Cardiac septum (tissue), 1 donor: ENCODE measurements at regions of chr11 and their contacts with region 1.

Region 1: DNA sequence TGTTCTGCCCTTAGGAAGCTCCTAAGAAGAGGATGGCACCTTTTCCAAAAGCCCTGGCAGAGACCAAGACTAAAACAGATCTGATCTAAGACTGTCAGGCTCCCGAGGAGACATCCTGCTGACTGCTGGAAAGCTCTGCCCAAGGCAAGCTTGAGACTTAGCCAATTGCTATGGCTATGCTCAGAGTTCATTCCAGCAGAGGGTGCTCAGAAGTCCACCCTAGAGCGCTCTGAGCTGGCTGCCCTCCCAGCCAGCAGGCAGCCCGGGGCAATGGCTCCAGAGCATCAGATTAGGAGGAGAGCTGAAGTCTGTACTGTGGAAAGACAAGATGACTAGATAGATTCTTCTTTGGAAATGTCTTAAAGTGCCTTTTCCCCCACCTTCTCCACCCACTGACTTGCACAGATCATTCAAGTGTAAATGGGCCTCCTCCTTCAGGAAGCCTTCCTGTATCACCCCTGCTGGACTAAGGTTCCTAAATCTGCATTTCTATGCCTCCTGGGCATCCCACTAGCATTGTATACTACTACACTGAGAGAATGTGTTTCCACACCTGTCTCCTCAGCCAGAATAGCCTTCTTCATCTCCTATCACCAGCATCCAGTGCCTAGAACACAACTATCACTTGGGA is 23.4 kb downstream of the LRRC55 start:
- DNase-seq: no peak

Region 2: GRCh38 chr11:56750190-56750589 is 455.0 kb before region 1 on chr11:
- intact Hi-C with region 1: no loop called
- DNase-seq: no peak

Region 3: DNA sequence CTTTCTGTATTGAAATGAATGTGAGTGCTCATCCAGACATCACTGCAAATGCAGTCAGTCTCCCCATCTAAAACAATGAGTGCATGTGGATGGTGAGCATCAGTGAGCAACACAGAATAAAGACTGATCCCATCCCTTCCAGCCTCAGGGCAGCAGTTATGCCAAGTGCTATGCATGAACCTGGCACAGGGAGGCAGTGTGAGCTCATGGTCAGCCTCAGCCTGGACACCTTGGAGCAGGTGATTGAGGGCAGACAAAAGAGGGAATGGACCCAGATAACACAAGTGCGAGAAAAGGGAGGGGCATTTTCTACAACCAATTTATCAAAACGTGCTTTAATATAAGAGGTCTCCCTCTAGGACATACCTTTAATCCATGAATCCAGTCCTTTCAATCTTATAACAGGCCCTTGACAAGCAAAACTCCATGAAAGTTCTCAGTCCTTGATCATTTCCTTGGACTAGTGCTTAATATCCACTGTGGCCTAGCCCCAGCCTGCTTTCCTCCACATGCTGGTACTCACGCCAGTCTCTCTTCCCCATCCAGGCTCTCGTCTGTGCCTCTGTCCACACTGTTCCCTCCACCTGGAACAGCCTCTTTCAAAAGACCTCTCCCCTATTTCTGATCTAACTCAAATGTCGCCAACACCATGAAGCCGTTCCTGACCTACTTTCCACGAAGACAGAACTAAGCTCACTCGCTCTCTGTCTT is 73.9 kb before region 1 on chr11:
- intact Hi-C with region 1: loop called (anchors 5 kb)
- DNase-seq: no peak

Region 4: DNA sequence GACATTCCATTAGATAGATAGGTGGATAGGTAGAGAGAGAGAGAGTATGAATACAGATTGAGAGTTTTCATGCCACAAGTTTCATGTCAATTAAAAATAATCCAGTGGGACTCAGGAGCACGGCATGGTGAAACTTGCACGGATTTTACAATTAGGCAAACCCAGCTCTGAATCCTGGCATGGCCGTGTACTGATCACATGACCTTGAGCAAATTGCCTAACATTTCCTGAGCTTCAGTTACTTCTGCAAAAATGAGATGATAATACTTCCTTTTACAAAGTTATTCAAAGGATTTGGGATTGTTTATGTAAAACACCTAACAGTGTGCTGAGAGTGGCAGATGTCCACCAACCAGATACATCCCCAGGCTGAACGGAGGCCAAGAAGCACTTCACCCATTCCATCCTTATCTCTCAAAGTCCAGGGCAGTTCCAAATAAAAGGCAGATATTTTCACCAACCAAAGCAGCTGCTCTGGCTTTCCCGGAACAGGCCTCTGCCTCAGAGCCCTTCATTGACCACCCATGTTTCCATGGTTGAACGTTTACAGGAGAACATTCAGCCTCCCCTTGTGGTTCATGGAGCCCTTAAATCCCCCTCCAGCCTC is 14.0 kb after region 1 on chr11:
- intact Hi-C with region 1: no loop called
- DNase-seq: no peak

Region 5: GRCh38 chr11:57230791-57231538 is 25.8 kb after region 1 on chr11:
- intact Hi-C with region 1: loop called (anchors 2 kb)
- DNase-seq: no peak

Region 6: DNA sequence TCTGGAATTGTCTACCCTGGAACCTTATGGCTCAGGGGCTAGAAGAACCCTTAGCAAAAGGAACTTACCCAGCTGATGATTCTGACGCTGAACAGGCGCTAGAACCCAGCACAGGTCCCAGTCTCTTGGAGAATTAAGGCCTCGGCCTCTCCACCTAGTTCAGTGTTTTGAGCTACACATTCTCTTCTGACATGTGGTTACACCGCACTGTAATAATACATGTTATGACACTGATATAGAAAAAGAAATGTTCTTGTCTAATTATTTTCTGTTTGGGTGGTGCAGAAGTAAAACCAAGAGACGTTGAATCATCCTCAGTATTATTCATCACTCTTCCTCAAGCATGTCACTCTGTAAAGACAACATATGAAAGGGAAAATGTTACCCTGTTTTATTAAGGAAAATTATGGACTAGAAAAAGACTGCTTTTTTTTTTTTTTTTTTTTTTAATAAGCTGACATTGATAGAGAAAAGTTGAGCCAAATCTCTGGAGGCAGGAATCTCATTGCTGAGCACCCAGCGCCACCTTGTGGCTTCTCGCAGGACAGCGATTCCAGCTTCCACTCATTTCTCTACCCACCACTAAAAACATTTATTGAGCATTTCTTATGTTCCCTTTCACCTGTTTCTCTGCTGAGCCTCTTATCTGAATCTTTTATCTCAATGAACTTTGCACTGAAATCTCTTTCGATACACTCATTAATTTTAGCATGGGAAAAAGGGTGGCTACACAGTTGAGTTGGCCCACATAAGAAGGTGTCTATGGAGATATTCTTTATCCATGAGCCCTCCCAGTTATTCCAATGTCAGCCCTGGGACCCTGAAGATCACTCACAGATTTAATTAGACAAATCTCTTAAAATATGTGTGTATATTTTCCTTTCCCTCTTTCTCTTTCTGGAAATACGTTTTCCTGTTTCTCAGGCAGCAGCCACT is 44.5 kb after region 1 on chr11:
- intact Hi-C with region 1: loop called (anchors 2 kb)
- DNase-seq: no peak

Region 7: DNA sequence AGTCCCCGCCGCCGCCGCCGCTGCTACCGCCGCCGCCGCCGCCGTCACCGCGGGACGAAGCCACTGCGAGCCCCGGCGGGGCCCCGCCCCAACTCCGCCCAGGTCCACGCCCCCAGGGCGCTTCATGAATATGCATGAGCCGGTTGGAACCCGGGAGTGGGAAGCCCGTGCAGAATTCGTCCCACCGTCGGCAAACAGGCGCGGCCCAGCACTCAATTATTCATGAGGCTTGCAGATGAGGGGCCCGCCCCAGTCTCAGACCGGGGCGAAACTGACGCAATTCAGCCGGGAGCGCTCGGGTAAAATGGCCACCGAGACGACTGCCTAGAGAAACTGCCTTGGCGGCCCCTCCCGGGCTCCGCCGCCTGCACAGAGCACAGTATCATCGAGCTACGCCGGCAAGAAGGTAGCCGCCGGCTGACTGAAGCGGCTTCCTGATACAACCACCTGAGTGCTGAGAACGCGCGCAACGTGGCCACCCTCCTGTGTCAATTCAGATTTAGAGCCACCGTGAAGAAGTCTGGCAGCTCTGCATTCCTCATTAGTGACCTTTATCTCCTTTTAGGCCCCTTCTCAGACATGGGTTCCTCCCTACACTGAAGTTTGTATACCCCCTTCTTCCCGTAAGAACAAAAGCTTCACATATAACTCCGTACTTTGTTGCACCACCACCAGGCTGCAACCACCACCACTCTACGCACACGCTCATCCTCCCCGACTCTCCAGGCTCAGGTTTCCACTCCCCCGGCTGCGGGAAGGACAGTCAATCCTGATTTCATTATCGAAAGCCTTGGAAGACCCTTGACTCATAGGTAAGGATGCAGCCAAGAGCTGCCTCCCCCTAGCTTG is 120.0 kb after region 1 on chr11 and contains the start of gene TNKS1BP1:
- intact Hi-C with region 1: loop called (anchors 5 kb)
- DNase-seq: peak; percentile 98
- total RNA-seq, gene TNKS1BP1: 36.2 TPM